BJ (cell line): ENCODE measurements at regions of chr9 and their contacts with region 1.

Region 1: GRCh38 chr9:94014065-94014654 is 59.0 kb upstream of the BARX1 start:
- DNase-seq: no peak
- H3K4me3 ChIP-seq: no peak overlapping the region
- H3K27me3 ChIP-seq: peaks cover 7% of the 10 kb centered on the region; the same call in 1 of the 2 replicates
- CTCF ChIP-seq: peak; percentile 71

Region 2: GRCh38 chr9:93635186-93636111 is 378.7 kb before region 1 on chr9:
- CTCF ChIA-PET with region 1: no interaction called
- POLR2A ChIA-PET with region 1: no interaction called
- DNase-seq: no peak
- H3K4me3 ChIP-seq: no peak overlapping the region
- H3K27me3 ChIP-seq: no peaks in the 10 kb centered on the region
- CTCF ChIP-seq: no peak

Region 3: GRCh38 chr9:94002316-94003140 is 11.6 kb before region 1 on chr9:
- CTCF ChIA-PET with region 1: interaction called, 46 read pairs
- POLR2A ChIA-PET with region 1: no interaction called
- DNase-seq: no peak
- H3K4me3 ChIP-seq: no peak overlapping the region
- H3K27me3 ChIP-seq: no peaks in the 10 kb centered on the region; the same call in 1 of the 2 replicates
- CTCF ChIP-seq: peak; percentile 59

Region 4: DNA sequence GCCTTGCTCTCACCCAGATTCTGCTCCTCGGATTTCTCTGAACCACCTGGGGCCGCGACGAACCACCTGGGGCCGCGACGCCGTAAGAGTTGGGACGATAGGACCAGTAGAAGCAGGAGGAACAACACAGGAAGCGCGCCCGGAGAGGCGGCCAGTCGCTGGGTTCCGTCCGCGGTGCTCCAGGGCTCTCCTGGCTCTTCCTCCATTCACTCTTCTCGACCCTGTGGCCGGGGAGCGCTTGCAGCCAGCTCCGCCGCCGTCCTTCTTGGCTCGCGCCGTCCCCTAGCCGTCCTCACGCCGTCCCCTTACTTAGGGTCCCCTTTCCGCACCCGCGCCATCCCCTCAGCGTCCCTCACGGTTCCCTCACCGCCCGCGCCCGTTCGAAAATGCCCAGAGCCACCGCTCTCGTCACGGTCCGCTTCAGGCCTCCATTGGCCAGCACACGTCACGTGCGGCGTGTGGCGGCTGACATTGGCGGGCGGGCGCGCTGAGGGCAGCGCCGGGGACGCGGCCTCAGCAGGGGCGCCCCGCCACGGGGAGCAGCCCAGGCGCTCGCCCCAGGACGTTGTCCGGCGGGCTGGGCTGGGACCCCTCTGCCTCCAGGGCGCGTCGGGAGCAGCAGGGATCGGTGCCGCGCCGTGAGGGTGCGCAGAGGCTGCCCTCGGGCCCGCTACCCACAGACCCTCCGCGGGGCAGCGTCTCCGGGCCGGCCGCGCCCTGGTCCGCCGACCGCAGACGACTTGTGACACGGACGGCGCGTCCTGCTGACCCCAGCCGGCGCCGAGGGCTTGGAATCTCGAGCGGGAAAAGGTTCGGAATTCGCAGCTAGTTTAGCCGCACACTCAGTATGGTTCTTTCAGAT is 16.4 kb after region 1 on chr9:
- CTCF ChIA-PET with region 1: interaction called, 16 read pairs
- POLR2A ChIA-PET with region 1: no interaction called
- DNase-seq: peak; percentile 19
- H3K4me3 ChIP-seq: peak overlapping the region; percentile 62
- H3K27me3 ChIP-seq: no peaks in the 10 kb centered on the region
- CTCF ChIP-seq: no peak

Region 5: DNA sequence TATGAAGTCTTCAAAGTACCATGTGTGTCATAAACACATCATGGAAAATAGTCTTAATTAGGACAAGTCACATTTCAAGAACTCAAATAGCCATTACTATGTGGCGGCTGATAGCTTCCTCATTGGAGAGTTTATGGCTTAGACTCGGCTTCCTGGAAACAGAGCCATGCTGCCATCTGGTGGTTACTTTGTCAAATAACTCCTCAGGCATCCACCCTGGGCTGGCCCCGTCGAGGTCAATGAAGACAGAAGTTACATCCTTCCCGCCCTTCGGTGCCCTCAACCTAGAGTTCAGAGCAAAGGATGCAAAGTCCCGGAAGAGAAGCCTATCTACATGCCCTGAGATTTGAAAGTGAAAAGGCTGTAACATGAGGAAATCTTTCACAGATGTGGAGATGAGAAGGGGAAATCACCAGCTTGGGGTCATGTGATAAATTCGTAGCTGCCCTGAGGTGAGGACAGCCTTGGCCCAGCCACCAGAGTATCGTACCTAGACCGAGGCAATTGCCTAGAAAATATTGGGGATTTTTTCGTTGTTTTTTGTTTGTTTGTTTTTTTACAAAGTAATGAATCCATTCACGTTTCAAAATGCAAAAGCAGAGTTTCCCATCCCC is 199.5 kb after region 1 on chr9:
- CTCF ChIA-PET with region 1: interaction called, 129 read pairs
- POLR2A ChIA-PET with region 1: no interaction called
- DNase-seq: no peak
- H3K4me3 ChIP-seq: no peak overlapping the region
- H3K27me3 ChIP-seq: no peaks in the 10 kb centered on the region
- CTCF ChIP-seq: peak; percentile 73